ENCODE measurements at regions of chr17 and their contacts with region 1.

Region 1: GRCh38 chr17:39636927-39637736 is at the start of gene STARD3:
- DNase-seq: peak; percentile 95 to 96 (median 95)
- ATAC-seq: peak; percentile 93 to 95 (median 93)
- H3K4me3 ChIP-seq: peak within 1 kb of the TSS; percentile 89 to 95 (median 94)
- H3K27ac ChIP-seq: peak within 1 kb of the TSS; percentile 82 to 90 (median 85)
- H3K4me1 ChIP-seq: peaks cover 0 to 17% (median 7%) of the 10 kb centered on the region in 4 donors
- H3K27me3 ChIP-seq: no peaks in the 10 kb centered on the region
- CTCF ChIP-seq: peak in 3 of 4 donors; percentile 22 to 34 (median 34)
- POLR2A ChIP-seq: peak; percentile 65
- total RNA-seq, gene STARD3: 24.3 to 49.8 (median 28.0) TPM

Region 2: GRCh38 chr17:39461926-39462569 is 175.1 kb before region 1 on chr17:
- intact Hi-C with region 1: no loop called
- DNase-seq: peak in 2 of 3 donors; percentile 54 to 59
- ATAC-seq: peak; percentile 26 to 41 (median 37)
- H3K4me3 ChIP-seq: peak overlapping the region; percentile 76 to 97 (median 96)
- H3K27ac ChIP-seq: peak overlapping the region; percentile 95 to 99 (median 99)
- H3K4me1 ChIP-seq: peaks cover 0 to 26% (median 10%) of the 10 kb centered on the region in 4 donors
- H3K27me3 ChIP-seq: no peaks in the 10 kb centered on the region
- CTCF ChIP-seq: no peak
- POLR2A ChIP-seq: no peak

Region 3: DNA sequence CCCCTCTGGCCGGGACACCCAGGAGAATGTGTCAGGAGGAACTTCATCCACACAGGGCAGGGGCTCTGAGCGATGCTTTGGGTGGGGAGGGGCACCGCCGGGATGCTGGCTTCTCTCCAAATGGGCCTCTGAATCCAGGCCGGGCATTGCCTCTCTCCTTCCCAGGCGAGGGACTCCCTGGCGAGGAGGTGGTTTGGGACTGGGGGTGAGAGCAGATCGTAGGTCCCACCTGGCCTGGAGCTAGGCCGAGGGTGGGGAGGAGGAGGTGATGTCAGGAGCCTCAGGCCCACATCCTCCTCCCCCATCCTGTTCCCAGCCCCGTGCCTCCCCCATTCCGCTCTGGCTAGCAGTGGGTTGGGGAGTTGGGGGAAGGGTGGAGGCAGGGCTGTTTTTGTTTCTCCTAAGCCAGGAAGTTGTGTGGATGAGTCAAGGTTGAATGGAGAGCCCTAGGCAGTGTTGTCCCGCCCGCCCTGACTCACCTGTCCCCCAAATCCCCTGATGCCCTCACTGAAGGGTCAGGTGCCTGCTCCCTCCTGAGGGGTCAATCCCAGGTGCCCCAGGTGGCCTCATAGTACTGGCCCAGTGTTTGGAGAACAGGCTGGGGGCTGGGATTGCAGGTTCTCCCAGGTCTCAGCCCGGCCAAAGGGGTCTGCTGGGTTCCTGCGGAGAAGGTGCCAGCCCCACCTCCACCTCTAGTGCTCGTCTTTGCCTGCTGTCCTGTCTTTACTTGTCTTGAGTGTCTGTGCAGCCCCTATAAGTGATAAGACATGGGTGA is 103.4 kb after region 1 on chr17:
- intact Hi-C with region 1: loop called in 1 of 2 experiments (anchors 10 kb)
- DNase-seq: peak in 1 of 3 donors; percentile 52
- ATAC-seq: peak in 1 of 4 donors; percentile 17
- H3K4me3 ChIP-seq: peak overlapping the region; percentile 51 to 82 (median 72)
- H3K27ac ChIP-seq: peak overlapping the region in 2 of 3 donors; percentile 62 to 94
- H3K4me1 ChIP-seq: peaks cover 0 to 15% (median 5%) of the 10 kb centered on the region in 4 donors
- H3K27me3 ChIP-seq: no peaks in the 10 kb centered on the region
- CTCF ChIP-seq: no peak
- POLR2A ChIP-seq: no peak